A549 (cell line): ENCODE measurements at regions of chr16 and their contacts with region 1.

Region 1: GRCh38 chr16:361872-362701 is 8.3 kb downstream of the MRPL28 start:
- DNase-seq: peak; percentile 89 to 94
- ATAC-seq: peak; percentile 86 to 94
- H3K4me3 ChIP-seq: no peak overlapping the region
- H3K27ac ChIP-seq: 0 out of 6 replicates have a peak overlapping the region, but pooled peaks of 1 of the 2 experiments have one; percentile 49
- H3K4me1 ChIP-seq: peaks cover 7% of the 10 kb centered on the region; the same call in 2 of the 3 replicates
- CTCF ChIP-seq: peak; percentile 88
- EP300 ChIP-seq: no peak
- POLR2A ChIP-seq: no peak
- RAD21 ChIP-seq: peak; percentile 96 to 97

Region 2: DNA sequence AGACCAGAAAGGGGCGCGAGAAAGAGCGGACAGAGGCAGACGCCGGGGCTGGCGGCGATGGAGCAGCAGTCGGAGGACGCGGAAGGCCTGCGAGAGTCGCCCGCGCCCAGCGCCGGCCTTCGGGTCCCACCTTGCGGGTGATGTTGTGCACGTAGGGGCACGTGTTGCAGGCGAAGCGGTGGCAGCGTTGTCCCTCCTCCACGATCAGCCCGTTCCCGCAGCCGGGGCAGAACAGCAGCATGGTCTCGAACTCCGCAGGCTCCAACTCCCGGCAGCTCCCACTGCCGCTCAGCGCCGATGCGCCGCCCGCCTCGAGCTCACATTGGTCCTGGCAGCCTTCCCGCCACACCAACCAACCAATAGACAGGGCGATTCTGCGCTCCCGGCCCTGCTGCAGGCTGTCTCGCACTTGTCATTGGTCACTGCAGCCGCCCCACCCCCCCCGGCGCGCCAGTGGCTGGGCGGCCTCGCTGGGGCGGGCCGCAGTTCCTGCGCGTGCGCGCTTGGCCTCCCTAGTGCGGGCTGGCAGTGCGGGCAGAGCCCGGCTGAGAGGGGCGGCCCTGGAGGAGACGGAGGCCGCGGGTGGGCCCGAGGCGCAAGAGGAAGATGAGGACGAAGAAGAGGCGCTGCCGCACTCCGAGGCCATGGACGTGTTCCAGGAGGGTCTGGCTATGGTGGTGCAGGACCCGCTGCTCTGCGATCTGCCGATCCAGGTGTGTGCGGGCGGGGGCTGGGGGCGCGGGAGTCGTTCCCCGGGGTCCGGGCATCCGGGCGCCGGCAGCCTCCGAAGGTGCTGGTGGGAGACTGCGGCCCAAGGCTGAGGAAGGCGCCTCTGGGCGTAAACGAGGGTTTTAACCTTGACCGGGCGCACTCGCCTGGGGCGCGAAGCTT is 308.5 kb before region 1 on chr16 and contains the starts of genes POLR3K and SNRNP25:
- CTCF ChIA-PET with region 1: interaction called, 17 read pairs
- POLR2A ChIA-PET with region 1: no interaction called
- DNase-seq: peak; percentile 98
- ATAC-seq: peak; percentile 96 to 98
- H3K4me3 ChIP-seq: peak within 1 kb of the TSS; percentile 70
- H3K27ac ChIP-seq: peak within 1 kb of the TSS; percentile 82 to 93
- H3K4me1 ChIP-seq: peaks cover 14% of the 10 kb centered on the region; the same call in 2 of the 3 replicates
- CTCF ChIP-seq: no peak
- EP300 ChIP-seq: no peak
- POLR2A ChIP-seq: peak; percentile 90
- RAD21 ChIP-seq: no peak
- polyA plus RNA-seq, gene POLR3K: 46.9 and 50.9 TPM in 2 replicates
- polyA plus RNA-seq, gene SNRNP25: 43.5 and 45.0 TPM in 2 replicates

Region 3: DNA sequence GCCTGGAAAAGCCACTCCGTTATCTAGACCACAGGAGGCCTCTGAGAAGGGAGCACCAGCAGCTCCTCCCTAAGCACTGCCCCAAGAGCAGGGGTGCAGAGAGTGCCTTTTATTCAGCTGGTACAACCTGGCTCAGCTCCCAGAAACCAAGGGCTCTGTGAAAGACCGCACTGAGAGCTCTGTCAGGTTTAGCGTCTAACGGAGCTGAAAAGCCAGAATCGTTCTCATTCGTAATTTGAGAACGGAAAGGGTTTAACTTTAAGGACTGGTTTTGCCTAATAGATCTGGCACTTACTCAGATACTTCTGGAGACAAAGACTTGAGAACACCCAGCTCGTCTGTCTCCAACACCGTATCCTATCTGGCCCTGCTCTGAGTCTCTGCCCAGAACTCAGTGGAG is 270.6 kb before region 1 on chr16:
- CTCF ChIA-PET with region 1: interaction called, 28 read pairs
- POLR2A ChIA-PET with region 1: no interaction called
- DNase-seq: no peak
- ATAC-seq: no peak
- H3K4me3 ChIP-seq: no peak overlapping the region
- H3K27ac ChIP-seq: no peak overlapping the region
- H3K4me1 ChIP-seq: no peaks in the 10 kb centered on the region
- CTCF ChIP-seq: no peak
- EP300 ChIP-seq: no peak
- POLR2A ChIP-seq: no peak
- RAD21 ChIP-seq: no peak

Region 4: DNA sequence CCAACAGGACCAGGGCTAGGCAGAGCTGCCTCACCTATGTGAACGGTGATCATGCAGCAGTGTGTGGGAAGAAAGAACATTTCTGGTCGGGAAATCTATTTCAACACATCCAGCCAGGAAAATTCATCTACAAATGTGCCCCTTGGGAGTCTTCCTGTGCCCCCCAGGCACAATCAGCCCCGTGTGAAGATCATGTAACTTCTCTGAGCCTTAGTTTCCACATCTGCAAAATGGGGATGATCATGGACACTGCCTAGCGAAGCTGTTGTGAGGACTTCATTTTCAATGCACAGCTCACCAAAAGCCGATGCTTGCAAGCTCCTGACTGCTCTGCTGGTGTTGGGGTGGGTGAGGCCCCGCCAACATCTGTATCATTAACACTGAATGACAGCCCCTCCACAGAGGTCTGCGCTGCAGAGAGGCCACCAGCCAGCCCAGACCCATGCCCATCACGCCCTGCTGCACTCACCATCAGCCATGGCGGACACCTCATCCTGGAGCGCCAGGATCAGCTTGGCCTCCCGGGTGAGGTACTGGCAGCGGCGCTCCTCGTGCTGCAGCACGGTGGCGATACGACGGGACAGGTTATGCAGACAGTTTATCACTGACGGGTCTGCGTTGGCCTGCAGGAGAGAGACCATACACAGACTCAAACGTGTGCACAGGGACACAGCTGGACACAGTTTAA is 249.8 kb before region 1 on chr16:
- CTCF ChIA-PET with region 1: interaction called, 71 read pairs
- POLR2A ChIA-PET with region 1: interaction called, 5 read pairs
- DNase-seq: no peak
- ATAC-seq: no peak
- H3K4me3 ChIP-seq: no peak overlapping the region
- H3K27ac ChIP-seq: peak overlapping the region; percentile 86 to 90
- H3K4me1 ChIP-seq: peaks cover 29% of the 10 kb centered on the region
- CTCF ChIP-seq: no peak
- EP300 ChIP-seq: no peak
- POLR2A ChIP-seq: no peak
- RAD21 ChIP-seq: no peak

Region 5: DNA sequence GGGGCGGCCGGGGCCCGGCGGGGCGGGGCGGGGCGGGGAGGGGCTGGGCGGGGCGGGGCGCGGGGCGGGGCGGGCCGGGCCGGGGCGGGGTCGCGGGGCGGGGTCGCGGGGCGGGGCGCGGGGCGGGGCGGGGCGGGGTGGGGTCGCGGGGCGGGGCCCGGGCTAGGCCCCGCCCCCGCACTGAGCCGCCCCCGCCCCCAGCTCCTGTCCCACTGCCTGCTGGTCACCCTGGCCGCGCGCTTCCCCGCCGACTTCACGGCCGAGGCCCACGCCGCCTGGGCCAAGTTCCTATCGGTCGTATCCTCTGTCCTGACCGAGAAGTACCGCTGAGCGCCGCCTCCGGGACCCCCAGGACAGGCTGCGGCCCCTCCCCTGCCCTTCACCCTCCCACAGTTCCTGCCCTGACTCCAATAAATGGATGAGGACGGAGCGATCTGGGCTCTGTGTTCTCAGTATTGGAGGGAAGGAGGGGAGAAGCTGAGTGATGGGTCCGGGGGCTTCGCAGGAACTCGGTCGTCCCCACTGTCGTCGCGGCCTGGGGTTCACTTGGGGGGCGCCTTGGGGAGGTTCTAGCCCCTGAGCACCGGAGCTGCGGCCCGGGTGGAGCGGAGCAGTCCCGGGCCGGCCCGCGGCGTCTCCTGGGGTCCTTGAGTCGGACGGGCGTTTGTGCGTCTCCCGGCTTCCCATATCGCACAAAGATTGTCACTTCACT is 197.1 kb before region 1 on chr16:
- CTCF ChIA-PET with region 1: interaction called, 10 read pairs
- POLR2A ChIA-PET with region 1: no interaction called
- DNase-seq: no peak
- ATAC-seq: peak in 1 of 2 experiments; percentile 51; a peak in 3 of 6 replicates
- H3K4me3 ChIP-seq: peak overlapping the region; percentile 47
- H3K27ac ChIP-seq: 0 out of 6 replicates have a peak overlapping the region, but pooled peaks of 1 of the 2 experiments have one; percentile 1
- H3K4me1 ChIP-seq: peaks cover 13% of the 10 kb centered on the region
- CTCF ChIP-seq: no peak
- EP300 ChIP-seq: no peak
- POLR2A ChIP-seq: no peak
- RAD21 ChIP-seq: no peak

Region 6: DNA sequence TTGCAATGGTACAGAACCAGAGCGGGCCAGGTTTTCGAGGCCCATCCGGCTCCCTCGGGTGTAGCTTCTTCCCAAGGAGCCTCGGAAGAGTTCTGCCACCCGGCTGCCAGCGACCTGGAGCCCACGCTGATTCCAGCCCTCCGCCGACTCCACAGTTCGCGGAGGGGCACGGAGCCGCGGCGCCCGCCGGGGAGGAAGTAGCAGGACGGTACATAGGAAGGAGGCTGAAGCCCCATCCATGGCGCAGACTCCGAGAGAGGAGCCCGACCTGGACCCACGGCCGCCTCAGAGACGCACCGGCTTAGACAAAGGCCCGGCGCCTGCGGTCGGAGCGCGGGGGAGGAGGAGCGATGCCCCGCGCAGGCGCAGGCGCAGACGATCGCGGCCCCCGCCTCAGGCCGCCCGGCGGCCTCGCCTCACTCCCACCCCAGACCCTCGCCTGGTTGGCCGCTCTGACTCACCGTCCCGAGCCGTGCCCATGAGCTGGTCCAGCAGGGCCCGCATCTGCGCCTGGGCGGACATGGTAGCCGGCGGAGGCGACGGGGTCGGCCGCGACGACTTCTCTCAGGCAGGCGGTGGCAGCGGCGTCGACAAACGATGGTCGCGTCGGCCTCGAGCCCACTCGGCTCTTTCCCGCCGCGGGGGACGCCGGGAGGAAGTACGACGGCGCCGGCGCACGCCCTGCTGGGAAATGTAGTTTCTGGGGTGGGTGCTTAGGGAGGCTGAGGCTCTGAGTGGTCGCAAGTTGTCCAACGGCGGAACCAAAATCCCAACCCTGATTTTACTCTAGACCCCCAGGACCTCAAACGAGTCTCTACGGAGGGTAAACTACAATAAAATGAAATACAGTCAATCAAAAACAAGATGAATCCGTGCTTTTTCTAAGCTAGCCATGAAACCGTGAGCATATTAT is 133.0 kb before region 1 on chr16 and contains the start of gene LUC7L:
- CTCF ChIA-PET with region 1: interaction called, 20 read pairs
- POLR2A ChIA-PET with region 1: interaction called, 5 read pairs
- DNase-seq: peak; percentile 90 to 91
- ATAC-seq: peak; percentile 96
- H3K4me3 ChIP-seq: peak within 1 kb of the TSS; percentile 75
- H3K27ac ChIP-seq: peak within 1 kb of the TSS; percentile 95 to 98
- H3K4me1 ChIP-seq: peaks cover 15% of the 10 kb centered on the region
- CTCF ChIP-seq: no peak
- EP300 ChIP-seq: no peak
- POLR2A ChIP-seq: peak; percentile 95
- RAD21 ChIP-seq: no peak
- polyA plus RNA-seq, gene LUC7L: 34.5 and 51.6 TPM in 2 replicates

Region 7: DNA sequence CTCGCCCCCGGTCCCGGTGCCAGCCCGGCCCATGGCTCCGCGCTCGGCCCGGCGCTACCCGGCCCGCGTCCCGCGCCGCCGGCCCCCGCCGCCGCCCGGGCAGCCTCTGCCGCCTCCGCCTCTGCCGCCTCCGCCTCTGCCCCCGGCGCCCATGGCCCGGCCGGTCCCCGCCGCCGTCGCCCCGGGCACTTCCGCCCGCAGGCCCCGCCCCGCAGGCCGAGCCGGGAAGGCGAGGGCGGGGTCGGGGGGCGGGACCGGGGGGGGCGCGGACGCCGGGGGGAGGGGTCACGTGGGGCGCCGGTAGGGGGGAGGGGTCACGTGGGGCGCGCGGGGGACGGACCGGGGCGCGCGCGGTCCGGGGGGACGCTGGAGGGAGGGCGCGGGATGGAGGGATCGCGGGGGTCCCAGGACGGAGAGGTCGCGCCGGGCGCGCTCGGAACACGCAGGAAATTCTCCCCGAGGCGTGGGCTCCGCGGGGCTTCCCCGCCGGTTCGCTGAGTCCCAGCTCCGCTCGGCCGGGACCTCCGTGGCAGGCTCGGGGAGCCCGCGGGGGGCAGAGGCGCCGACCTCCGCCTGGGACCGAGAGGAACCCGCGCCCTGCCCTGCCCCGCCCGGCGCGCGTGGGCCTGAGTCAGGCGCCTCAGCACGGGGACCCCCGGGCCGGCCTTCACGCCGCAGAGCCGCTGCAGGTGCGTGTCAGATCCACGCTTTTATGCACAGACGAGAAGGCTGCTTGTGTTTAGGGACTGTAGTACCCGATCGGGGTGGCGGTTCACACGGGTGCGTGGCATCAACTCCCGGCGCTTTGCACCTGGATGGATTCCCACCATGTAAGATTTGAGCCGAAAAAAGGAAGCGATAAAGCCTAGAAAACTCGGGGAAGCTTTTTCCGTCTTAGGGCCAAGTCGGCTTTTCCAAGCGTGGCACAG is 20.0 kb after region 1 on chr16 and contains the start of gene PGAP6:
- CTCF ChIA-PET with region 1: interaction called, 11 read pairs
- POLR2A ChIA-PET with region 1: no interaction called
- DNase-seq: no peak
- ATAC-seq: peak; percentile 7 to 67
- H3K4me3 ChIP-seq: peak within 1 kb of the TSS; percentile 98
- H3K27ac ChIP-seq: peak within 1 kb of the TSS; percentile 92 to 97
- H3K4me1 ChIP-seq: peaks cover 10% of the 10 kb centered on the region; the same call in 2 of the 3 replicates
- CTCF ChIP-seq: no peak
- EP300 ChIP-seq: no peak
- POLR2A ChIP-seq: peak; percentile 47; the same call in 1 of the 2 replicates
- RAD21 ChIP-seq: no peak
- polyA plus RNA-seq, gene PGAP6: 25.9 and 36.0 TPM in 2 replicates

Region 8: GRCh38 chr16:456891-457483 is 94.9 kb after region 1 on chr16:
- CTCF ChIA-PET with region 1: no interaction called
- POLR2A ChIA-PET with region 1: no interaction called
- DNase-seq: no peak
- ATAC-seq: peak in 1 of 2 experiments; percentile 66; a peak in 4 of 6 replicates
- H3K4me3 ChIP-seq: no peak overlapping the region
- H3K27ac ChIP-seq: peak overlapping the region; percentile 29 to 60; a peak in 1 of 6 replicates
- H3K4me1 ChIP-seq: peaks cover 30% of the 10 kb centered on the region
- CTCF ChIP-seq: no peak
- EP300 ChIP-seq: no peak
- POLR2A ChIP-seq: no peak
- RAD21 ChIP-seq: no peak

Region 9: GRCh38 chr16:1036726-1037393 is 674.8 kb after region 1 on chr16:
- CTCF ChIA-PET with region 1: no interaction called
- POLR2A ChIA-PET with region 1: no interaction called
- DNase-seq: no peak
- ATAC-seq: peak; percentile 69 to 77; a peak in 5 of 6 replicates
- H3K4me3 ChIP-seq: no peak overlapping the region
- H3K27ac ChIP-seq: peak overlapping the region in 1 of 2 experiments; percentile 55; a peak in 3 of 6 replicates
- H3K4me1 ChIP-seq: peaks cover 10% of the 10 kb centered on the region
- CTCF ChIP-seq: no peak
- EP300 ChIP-seq: no peak
- POLR2A ChIP-seq: no peak
- RAD21 ChIP-seq: no peak